ENCODE measurements at regions of chr22 and their contacts with region 1.

Region 1: DNA sequence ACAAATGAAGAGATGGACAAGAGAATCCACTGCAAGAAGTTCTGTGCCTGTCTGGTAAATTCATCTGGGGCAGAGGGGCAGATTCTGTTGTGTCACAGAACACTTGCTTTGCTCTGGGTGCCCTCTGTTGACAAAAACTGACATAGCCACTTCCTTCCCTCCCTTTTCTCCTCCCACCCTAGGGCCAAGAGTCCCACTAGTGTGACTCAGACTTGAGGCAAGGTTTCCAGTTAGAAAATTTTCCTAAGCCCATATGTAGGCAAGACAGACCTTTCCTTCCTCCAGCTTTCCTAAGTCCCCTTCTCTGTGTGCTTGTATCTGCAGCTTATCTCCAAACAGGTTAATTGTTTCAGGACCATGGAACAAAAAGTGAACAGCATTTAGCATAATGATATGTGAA is 106.8 kb downstream of the RBFOX2 start:
- DNase-seq: peak; percentile 75
- ATAC-seq: peak; percentile 94
- H3K4me3 ChIP-seq: no peak overlapping the region
- H3K27ac ChIP-seq: peak overlapping the region; percentile 37
- H3K4me1 ChIP-seq: peaks cover 33% of the 10 kb centered on the region
- H3K27me3 ChIP-seq: no peaks in the 10 kb centered on the region
- CTCF ChIP-seq: peak; percentile 84
- EP300 ChIP-seq: no peak
- POLR2A ChIP-seq: no peak
- RAD21 ChIP-seq: peak; percentile 56; the same call in 1 of the 2 replicates

Region 2: GRCh38 chr22:35761037-35761436 is 160.7 kb before region 1 on chr22:
- CTCF ChIA-PET with region 1: interaction called, 4 read pairs
- POLR2A ChIA-PET with region 1: no interaction called
- in situ Hi-C with region 1: no loop called
- intact Hi-C with region 1: loop called (anchors 5 kb)
- DNase-seq: peak; percentile 20
- ATAC-seq: 0 out of 3 replicates have a peak, but pooled peaks have one; percentile 36
- H3K4me3 ChIP-seq: no peak overlapping the region
- H3K27ac ChIP-seq: no peak overlapping the region
- H3K4me1 ChIP-seq: peaks cover 8% of the 10 kb centered on the region
- H3K27me3 ChIP-seq: no peaks in the 10 kb centered on the region; a peak in 1 of 5 replicates
- CTCF ChIP-seq: peak; percentile 36
- EP300 ChIP-seq: no peak
- POLR2A ChIP-seq: no peak
- RAD21 ChIP-seq: 0 out of 2 replicates have a peak, but pooled peaks have one; percentile 15

Region 3: DNA sequence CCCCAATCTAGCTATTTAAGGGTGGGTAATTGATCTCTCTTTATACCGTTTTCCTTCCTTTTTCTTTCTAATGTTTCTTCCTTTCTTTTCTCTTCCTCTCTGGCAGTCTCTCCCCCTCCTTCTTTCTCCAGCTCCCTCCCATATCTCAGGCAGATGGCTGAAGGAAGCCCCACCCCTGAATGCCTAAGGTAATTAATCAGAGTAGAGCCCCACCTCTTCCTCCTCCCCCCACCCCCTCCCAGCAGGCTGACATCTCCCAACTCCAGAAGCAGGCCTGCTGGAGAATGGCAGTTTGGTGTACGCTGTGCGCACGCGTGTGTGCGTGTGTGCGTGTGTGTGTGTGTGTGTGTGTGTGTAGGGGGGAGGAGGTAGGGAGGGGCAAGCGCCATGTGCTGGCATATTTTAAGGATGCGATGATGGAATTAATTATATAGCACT is 81.5 kb before region 1 on chr22:
- CTCF ChIA-PET with region 1: no interaction called
- POLR2A ChIA-PET with region 1: no interaction called
- in situ Hi-C with region 1: no loop called
- intact Hi-C with region 1: loop called (anchors 5 kb)
- DNase-seq: no peak
- ATAC-seq: no peak
- H3K4me3 ChIP-seq: no peak overlapping the region
- H3K27ac ChIP-seq: no peak overlapping the region
- H3K4me1 ChIP-seq: peaks cover 20% of the 10 kb centered on the region
- H3K27me3 ChIP-seq: no peaks in the 10 kb centered on the region
- CTCF ChIP-seq: no peak
- EP300 ChIP-seq: no peak
- POLR2A ChIP-seq: no peak
- RAD21 ChIP-seq: no peak

Region 4: DNA sequence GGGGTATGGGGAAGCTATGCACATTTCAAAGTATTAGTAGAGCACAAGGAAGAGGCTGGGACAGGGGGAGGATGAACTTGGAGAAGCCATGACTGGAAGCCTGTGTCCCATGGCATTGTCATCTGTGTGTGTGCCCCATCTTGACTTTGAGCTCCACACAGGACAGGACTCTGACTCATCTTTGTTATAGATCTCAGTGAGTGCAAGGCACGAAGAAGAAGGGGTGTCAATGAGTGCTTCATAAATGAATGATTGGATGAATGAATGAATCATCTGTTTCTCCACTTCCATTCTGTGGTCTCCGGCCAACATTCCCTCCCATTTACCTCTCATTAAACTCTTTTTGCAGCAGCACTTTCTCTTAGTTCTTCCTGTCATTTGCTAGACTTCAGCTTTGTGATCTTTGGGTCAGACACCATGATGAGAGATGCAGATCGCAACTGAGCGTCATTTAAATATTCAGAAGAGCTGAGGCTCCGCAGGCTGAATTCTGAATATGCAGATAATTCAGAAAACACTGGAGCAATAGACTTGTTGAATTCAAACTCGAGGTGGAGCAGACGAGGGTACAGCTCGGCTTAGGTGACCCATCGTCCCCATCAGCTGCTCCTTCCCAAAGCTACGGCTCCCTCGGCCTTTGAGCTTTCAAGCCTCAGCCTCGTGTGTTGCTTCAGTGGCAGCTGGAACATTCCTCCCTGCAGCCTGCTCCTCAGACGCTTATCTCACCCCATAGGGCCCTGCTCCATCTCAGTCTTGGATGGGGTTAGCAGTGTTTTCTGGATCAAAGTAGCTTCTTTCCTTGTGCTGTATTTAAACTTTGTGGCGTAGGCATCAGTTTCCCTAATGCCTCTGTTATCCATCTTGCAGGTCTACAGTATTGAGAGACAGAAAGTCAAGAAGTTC is 208.0 kb after region 1 on chr22:
- CTCF ChIA-PET with region 1: no interaction called
- POLR2A ChIA-PET with region 1: no interaction called
- in situ Hi-C with region 1: no loop called
- intact Hi-C with region 1: loop called (anchors 5 kb)
- DNase-seq: no peak
- ATAC-seq: no peak
- H3K4me3 ChIP-seq: no peak overlapping the region
- H3K27ac ChIP-seq: no peak overlapping the region
- H3K4me1 ChIP-seq: peaks cover 44% of the 10 kb centered on the region
- H3K27me3 ChIP-seq: peaks cover 2 to 33% of the 10 kb centered on the region in 2 experiments; a peak in 4 of 5 replicates
- CTCF ChIP-seq: no peak
- EP300 ChIP-seq: no peak
- POLR2A ChIP-seq: no peak
- RAD21 ChIP-seq: no peak

Measured in HepG2 (cell line).